Heart left ventricle (tissue), 16 donors: ENCODE measurements at regions of chr3 and their contacts with region 1.

Region 1: GRCh38 chr3:39933986-39934693 is 124.7 kb downstream of the MYRIP start:
- DNase-seq: no peak
- ATAC-seq: no peak
- H3K4me3 ChIP-seq: no peak overlapping the region
- H3K27ac ChIP-seq: no peak overlapping the region
- H3K4me1 ChIP-seq: peaks cover 0 to 29% (median 12%) of the 10 kb centered on the region in 12 donors
- H3K27me3 ChIP-seq: no peaks in the 10 kb centered on the region
- CTCF ChIP-seq: no peak
- POLR2A ChIP-seq: no peak

Region 2: DNA sequence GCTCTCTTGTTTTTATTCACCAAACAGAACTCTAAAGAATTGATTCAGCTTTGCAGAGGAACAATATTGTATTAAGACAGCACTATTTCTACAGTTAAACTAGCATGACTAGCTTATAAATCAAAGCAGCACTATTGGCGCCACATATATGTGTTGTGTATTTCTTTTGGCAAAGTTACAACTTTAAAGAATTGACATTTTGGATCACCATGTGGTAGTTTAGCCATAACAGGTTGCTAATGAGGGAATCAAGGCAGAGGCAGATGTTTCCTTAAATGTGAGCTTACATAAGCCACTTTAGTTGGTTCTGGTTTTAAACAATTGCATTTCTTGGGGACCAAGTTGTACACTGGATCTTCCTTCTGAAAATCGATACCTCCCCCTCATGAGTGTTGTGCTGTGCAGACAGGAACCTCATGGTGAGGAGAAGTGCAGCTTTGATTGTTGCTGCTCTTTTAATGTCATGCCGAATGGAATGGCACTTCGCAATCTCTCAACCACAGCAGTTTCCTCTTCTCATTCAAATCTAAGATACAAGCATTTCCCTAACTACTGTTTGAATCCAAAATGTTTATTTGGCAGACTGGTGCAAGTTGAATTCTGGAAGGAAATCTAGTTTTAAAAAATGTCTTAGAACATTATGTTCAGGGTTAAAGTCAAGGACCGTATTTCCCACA is 26.5 kb after region 1 on chr3:
- intact Hi-C with region 1: loop called in 1 of 10 experiments (anchors 2 kb)
- DNase-seq: no peak
- ATAC-seq: peak; percentile 70 to 92 (median 83)
- H3K4me3 ChIP-seq: no peak overlapping the region
- H3K27ac ChIP-seq: peak overlapping the region in 11 of 12 donors; percentile 2 to 71 (median 53)
- H3K4me1 ChIP-seq: peaks cover 0 to 37% (median 19%) of the 10 kb centered on the region in 12 donors
- H3K27me3 ChIP-seq: no peaks in the 10 kb centered on the region
- CTCF ChIP-seq: no peak
- POLR2A ChIP-seq: no peak